MCF 10A (cell line): ENCODE measurements at regions of chr13 and their contacts with region 1.

Region 1: GRCh38 chr13:78137404-78138142 is 218.9 kb upstream of the EDNRB start:
- DNase-seq: peak; percentile 68
- H3K4me3 Mint-ChIP-seq: no peak overlapping the region
- H3K27ac Mint-ChIP-seq: no peak overlapping the region
- H3K4me1 Mint-ChIP-seq: no peaks in the 10 kb centered on the region
- H3K27me3 Mint-ChIP-seq: peaks cover under 1% of the 10 kb centered on the region
- CTCF ChIP-seq: peak; percentile 81

Region 2: DNA sequence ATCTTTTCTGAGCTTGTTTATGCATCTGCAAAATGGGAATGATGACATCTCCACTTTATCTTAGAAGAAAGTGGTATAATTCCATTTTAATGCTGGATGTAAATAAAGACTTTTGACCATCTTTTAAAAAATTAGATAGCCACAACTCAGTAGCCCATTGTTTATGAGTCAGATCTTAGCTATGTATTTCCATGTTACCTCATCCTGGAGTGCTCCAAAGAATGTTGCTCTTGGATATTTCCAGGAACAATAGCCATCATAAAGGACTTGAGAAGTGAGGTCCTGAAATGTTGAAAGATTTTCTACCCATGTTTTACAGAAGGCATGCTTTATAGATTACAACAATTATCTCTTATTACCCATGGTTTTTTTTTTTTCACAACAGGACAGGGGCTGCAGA is 10.3 kb after region 1 on chr13:
- CTCF ChIA-PET with region 1: interaction called, 31 read pairs
- POLR2A ChIA-PET with region 1: no interaction called
- intact Hi-C with region 1: no loop called
- DNase-seq: peak; percentile 51
- H3K4me3 Mint-ChIP-seq: no peak overlapping the region
- H3K27ac Mint-ChIP-seq: no peak overlapping the region
- H3K4me1 Mint-ChIP-seq: no peaks in the 10 kb centered on the region
- H3K27me3 Mint-ChIP-seq: peaks cover 11% of the 10 kb centered on the region
- CTCF ChIP-seq: no peak

Region 3: GRCh38 chr13:78341032-78341431 is 203.5 kb after region 1 on chr13:
- CTCF ChIA-PET with region 1: no interaction called
- POLR2A ChIA-PET with region 1: no interaction called
- intact Hi-C with region 1: no loop called
- DNase-seq: no peak
- H3K4me3 Mint-ChIP-seq: no peak overlapping the region
- H3K27ac Mint-ChIP-seq: no peak overlapping the region
- H3K4me1 Mint-ChIP-seq: no peaks in the 10 kb centered on the region
- H3K27me3 Mint-ChIP-seq: peaks cover 23% of the 10 kb centered on the region
- CTCF ChIP-seq: no peak

Region 4: GRCh38 chr13:79246578-79246949 is 1109.0 kb after region 1 on chr13:
- CTCF ChIA-PET with region 1: interaction called, 7 read pairs
- POLR2A ChIA-PET with region 1: no interaction called
- intact Hi-C with region 1: loop called (anchors 5 kb)
- DNase-seq: peak; percentile 13
- H3K4me3 Mint-ChIP-seq: no peak overlapping the region
- H3K27ac Mint-ChIP-seq: no peak overlapping the region
- H3K4me1 Mint-ChIP-seq: no peaks in the 10 kb centered on the region
- H3K27me3 Mint-ChIP-seq: peaks cover 14% of the 10 kb centered on the region
- CTCF ChIP-seq: peak; percentile 26

Region 5: GRCh38 chr13:79340490-79340889 is 1202.9 kb after region 1 on chr13:
- CTCF ChIA-PET with region 1: no interaction called
- POLR2A ChIA-PET with region 1: no interaction called
- intact Hi-C with region 1: loop called (anchors 10 kb)
- DNase-seq: no peak
- H3K4me3 Mint-ChIP-seq: no peak overlapping the region
- H3K27ac Mint-ChIP-seq: no peak overlapping the region
- H3K4me1 Mint-ChIP-seq: no peaks in the 10 kb centered on the region
- H3K27me3 Mint-ChIP-seq: no peaks in the 10 kb centered on the region
- CTCF ChIP-seq: no peak